ENCODE measurements at regions of chr15 and their contacts with region 1.

Region 1: GRCh38 chr15:65869127-65869953 is at the start of gene RAB11A:
- DNase-seq: peak; percentile 98
- H3K27ac ChIP-seq: peak within 1 kb of the TSS; percentile 91
- CTCF ChIP-seq: peak; percentile 68

Region 2: DNA sequence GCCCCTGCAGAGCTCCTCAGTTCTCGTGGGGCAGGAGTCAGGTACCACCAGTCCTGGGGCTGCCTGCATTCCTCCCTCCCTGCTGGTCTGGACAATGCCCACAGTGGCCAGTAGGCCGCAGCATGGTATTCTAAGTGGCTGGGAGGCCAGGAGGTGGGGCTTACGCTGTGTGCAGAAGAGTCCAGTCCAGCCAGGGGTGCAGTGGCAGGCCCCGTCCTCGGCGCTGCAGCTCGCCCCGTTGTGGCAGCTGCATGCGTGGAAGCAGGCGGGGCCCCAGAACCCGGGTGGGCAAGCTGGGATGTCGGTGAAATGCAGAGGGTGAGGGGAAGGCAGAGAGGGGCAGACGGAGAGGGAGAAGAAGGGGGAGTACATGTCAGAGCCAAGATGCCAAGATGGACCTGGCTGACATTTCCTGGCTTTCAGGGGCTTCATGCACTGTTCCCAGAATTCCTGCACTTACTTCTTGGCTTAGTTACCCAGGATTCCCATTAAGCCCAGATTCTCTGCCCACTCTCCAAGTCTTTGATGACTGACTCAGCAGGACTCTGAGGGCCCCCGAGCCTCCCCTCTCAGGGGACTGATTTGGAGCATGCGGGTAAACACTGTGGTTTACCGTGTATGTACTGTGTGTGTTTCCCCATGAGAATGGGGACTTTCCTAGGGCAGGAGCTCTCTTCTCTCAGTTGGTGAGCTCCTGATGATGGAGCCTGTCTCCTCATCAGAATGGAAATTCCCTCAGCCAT is 47.5 kb after region 1 on chr15:
- CTCF ChIA-PET with region 1: no interaction called
- POLR2A ChIA-PET with region 1: interaction called, 10 read pairs
- DNase-seq: peak; percentile 45
- H3K27ac ChIP-seq: no peak overlapping the region
- CTCF ChIP-seq: no peak; the same call in 1 of the 2 replicates